H1 (cell line): ENCODE measurements at regions of chr1 and their contacts with region 1.

Region 1: DNA sequence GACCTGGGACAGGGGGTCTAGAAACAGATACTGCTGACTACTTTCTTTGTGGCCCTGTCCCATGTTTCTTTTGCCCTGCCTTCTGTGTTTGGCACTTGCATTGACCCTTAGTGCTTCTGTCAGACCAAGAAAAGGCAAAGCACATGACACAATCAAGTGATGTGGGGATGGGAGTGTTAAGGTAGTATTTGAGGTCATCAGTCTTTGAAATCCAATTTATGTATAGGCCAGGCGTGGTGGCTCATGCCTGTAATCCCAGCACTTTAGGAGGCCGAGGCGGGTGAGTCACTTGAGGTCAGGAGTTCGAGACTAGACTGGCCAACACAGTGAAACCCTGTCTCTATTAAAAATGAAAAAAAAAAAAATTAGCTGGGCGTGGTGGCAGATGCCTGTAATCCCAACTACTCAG is 26.0 kb downstream of the SERBP1 start:
- DNase-seq: no peak
- H3K4me3 ChIP-seq: no peak overlapping the region
- H3K27ac ChIP-seq: no peak overlapping the region
- H3K4me1 ChIP-seq: peaks cover 1 to 12% (median 7%) of the 10 kb centered on the region in 4 experiments; a peak in 4 of 7 replicates
- H3K27me3 ChIP-seq: no peaks in the 10 kb centered on the region
- CTCF ChIP-seq: no peak
- EP300 ChIP-seq: no peak
- POLR2A ChIP-seq: peak in 1 of 2 experiments; percentile 42; a peak in 1 of 3 replicates
- RAD21 ChIP-seq: no peak

Region 2: DNA sequence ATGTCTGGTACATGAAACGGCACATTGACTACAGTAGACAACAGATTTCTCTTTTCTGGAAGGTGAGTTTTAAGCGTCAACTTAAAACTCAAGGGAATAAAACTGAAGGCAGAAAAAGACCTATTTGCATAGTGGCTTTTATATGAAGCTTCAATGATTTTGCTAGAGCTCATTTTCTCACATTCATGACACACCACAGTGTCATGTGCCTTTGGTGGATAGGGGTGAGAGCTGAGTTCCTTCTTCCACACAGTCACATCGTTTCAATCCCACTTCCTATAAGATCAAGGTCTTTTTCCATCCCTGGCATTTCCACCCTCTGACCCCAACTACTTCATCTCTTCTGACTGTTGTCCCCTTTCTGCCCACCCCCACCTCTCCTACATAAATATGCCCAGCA is 65.6 kb before region 1 on chr1:
- CTCF ChIA-PET with region 1: no interaction called
- POLR2A ChIA-PET with region 1: no interaction called
- DNase-seq: no peak
- H3K4me3 ChIP-seq: no peak overlapping the region
- H3K27ac ChIP-seq: no peak overlapping the region
- H3K4me1 ChIP-seq: peaks cover 4 to 9% (median 8%) of the 10 kb centered on the region in 4 experiments; a peak in 5 of 7 replicates
- H3K27me3 ChIP-seq: no peaks in the 10 kb centered on the region; a peak in 2 of 7 replicates
- CTCF ChIP-seq: no peak
- EP300 ChIP-seq: no peak
- POLR2A ChIP-seq: no peak
- RAD21 ChIP-seq: no peak

Region 3: GRCh38 chr1:67390041-67390887 is 14.0 kb before region 1 on chr1:
- CTCF ChIA-PET with region 1: interaction called, 5 read pairs
- POLR2A ChIA-PET with region 1: interaction called, 43 read pairs
- DNase-seq: no peak
- H3K4me3 ChIP-seq: no peak overlapping the region
- H3K27ac ChIP-seq: no peak overlapping the region
- H3K4me1 ChIP-seq: peaks cover 2 to 9% (median 4%) of the 10 kb centered on the region in 4 experiments; a peak in 6 of 7 replicates
- H3K27me3 ChIP-seq: no peaks in the 10 kb centered on the region
- CTCF ChIP-seq: no peak
- EP300 ChIP-seq: no peak
- POLR2A ChIP-seq: no peak
- RAD21 ChIP-seq: no peak

Region 4: GRCh38 chr1:67418839-67419586 is 14.8 kb after region 1 on chr1:
- CTCF ChIA-PET with region 1: interaction called, 4 read pairs
- POLR2A ChIA-PET with region 1: interaction called, 14 read pairs
- DNase-seq: no peak
- H3K4me3 ChIP-seq: no peak overlapping the region
- H3K27ac ChIP-seq: no peak overlapping the region
- H3K4me1 ChIP-seq: no peaks in the 10 kb centered on the region
- H3K27me3 ChIP-seq: no peaks in the 10 kb centered on the region
- CTCF ChIP-seq: no peak
- EP300 ChIP-seq: no peak
- POLR2A ChIP-seq: no peak
- RAD21 ChIP-seq: no peak